ENCODE measurements at regions of chr22 and their contacts with region 1.

Region 1: DNA sequence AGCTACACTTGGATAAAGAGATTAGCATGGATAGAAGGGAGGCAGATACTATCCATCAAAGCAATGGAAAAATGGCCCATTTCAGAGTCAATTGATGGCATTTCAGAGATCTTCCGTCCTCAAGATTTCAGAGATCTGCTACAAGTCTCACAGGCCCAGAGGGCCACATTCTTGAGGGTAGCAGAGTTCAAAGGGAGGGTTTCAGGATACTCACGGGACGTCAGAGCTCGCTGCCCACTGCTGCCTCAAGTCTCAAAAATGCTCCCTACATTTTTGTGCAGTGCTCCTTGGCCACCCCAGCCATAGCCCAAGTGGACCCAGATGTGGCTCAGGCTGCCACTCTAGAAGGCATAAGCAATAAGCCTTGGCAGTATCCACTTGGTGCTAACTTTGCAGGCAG is 24.9 kb downstream of the RTL6 start:
- DNase-seq: no peak
- ATAC-seq: no peak
- H3K4me3 ChIP-seq: no peak overlapping the region
- H3K4me3 Mint-ChIP-seq: no peak overlapping the region
- H3K27ac ChIP-seq: no peak overlapping the region
- H3K27ac Mint-ChIP-seq: no peak overlapping the region
- H3K4me1 ChIP-seq: no peaks in the 10 kb centered on the region
- H3K4me1 Mint-ChIP-seq: no peaks in the 10 kb centered on the region
- H3K27me3 ChIP-seq: peaks cover 0 to 5% of the 10 kb centered on the region in 2 experiments
- H3K27me3 Mint-ChIP-seq: peaks cover 4% of the 10 kb centered on the region
- CTCF ChIP-seq: no peak

Region 2: DNA sequence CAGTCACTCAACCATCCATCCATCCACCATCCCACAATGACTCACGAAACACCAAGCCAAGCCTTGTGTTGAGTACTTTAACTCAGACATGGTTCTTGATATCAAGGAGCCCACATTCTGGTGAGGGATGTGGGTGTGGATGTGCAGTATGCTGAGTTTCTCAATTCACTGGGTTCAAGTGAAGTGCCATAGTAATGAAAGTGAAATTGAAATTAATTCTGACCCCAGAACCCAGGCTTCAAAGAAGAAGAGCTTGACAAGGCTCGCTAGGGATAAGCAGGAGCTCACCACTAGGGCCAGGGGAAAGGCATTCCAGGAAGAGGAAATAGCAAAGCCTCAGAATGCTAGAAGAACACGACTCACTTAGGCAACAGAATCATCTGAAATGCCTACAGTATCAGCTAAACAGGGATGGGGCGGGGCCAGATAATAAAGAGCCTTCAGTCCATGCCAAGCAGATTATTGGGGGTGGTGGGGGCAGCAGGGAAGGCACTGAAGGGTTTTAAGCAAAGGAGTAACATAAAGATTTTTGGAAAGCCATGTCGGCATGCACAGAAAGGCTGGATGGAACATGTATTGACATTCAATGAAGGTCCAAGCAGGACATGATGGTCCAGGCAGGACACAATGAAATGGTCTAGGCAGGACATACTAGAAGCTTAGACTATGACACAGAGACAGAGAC is 12.3 kb before region 1 on chr22:
- CTCF ChIA-PET with region 1: no interaction called
- POLR2A ChIA-PET with region 1: no interaction called
- intact Hi-C with region 1: no loop called
- DNase-seq: peak in 1 of 14 experiments; percentile 20
- ATAC-seq: no peak
- H3K4me3 ChIP-seq: no peak overlapping the region
- H3K4me3 Mint-ChIP-seq: no peak overlapping the region
- H3K27ac ChIP-seq: no peak overlapping the region
- H3K27ac Mint-ChIP-seq: no peak overlapping the region
- H3K4me1 ChIP-seq: peaks cover 43% of the 10 kb centered on the region
- H3K4me1 Mint-ChIP-seq: peaks cover 16% of the 10 kb centered on the region
- H3K27me3 ChIP-seq: no peaks in the 10 kb centered on the region
- H3K27me3 Mint-ChIP-seq: no peaks in the 10 kb centered on the region
- CTCF ChIP-seq: no peak

Region 3: GRCh38 chr22:44505796-44506354 is 32.7 kb after region 1 on chr22:
- CTCF ChIA-PET with region 1: no interaction called
- POLR2A ChIA-PET with region 1: no interaction called
- intact Hi-C with region 1: loop called in 1 of 2 experiments (anchors 5 kb)
- DNase-seq: no peak
- ATAC-seq: peak; percentile 29
- H3K4me3 ChIP-seq: no peak overlapping the region
- H3K4me3 Mint-ChIP-seq: no peak overlapping the region
- H3K27ac ChIP-seq: no peak overlapping the region
- H3K27ac Mint-ChIP-seq: peak overlapping the region; percentile 21
- H3K4me1 ChIP-seq: peaks cover 8% of the 10 kb centered on the region
- H3K4me1 Mint-ChIP-seq: peaks cover 11% of the 10 kb centered on the region
- H3K27me3 ChIP-seq: peaks cover 0 to 16% of the 10 kb centered on the region in 2 experiments
- H3K27me3 Mint-ChIP-seq: peaks cover 7% of the 10 kb centered on the region
- CTCF ChIP-seq: no peak

Measured in CD4-positive, alpha-beta T cell (primary cell).